ENCODE measurements at regions of chr20 and their contacts with region 1.

Region 1: GRCh38 chr20:24755411-24755922 is 193.6 kb upstream of the CST7 start:
- DNase-seq: peak; percentile 8
- ATAC-seq: peak; percentile 89

Region 2: DNA sequence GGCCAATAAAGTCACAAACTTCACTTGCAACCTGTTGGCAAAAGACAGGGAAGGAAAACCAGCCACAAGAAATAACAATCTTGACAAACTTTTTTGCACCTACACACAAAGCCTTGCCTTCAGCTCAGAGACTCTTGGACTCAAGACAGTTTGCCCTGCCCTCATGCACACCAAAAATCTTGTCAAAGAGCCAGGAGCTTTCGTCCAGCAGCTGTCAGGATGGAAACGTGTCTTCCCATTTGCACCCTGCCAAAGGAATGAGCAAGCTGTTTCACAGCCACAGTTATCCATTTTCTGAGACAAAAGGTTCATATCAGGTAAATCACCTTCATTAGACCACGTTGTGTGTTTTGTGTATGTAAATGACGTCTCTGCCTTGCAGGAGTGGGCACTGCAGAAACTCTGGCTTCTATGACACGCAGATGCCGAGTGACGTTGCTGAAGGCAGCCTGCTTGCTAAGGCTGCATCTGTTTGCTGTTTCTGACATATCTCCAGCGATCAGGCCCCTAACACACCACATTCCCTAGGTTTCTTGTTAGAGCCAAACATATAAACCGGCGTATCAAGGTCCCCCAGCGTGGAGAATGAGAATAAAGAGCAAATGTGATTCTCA is 92.6 kb before region 1 on chr20:
- intact Hi-C with region 1: no loop called
- DNase-seq: peak; percentile 17
- ATAC-seq: no peak

Region 3: DNA sequence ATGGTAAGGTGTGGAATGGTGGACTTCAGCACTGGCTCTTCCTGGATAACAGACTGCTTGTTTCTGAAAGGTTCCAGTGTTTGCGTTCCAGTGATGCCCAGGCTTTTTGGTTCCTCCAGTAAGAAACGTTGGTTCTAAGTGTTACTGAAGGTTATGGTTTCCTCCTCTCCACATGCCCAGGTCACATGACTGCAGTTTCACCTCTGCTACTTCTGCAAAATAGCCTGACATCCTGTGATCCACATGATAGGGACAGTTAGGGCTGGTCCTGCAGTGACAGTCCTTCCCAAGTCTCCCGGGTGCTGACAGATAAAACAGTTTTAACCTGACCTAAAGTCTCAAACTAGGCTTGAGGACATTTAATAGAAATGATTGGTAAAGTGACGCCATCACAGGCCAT is 61.4 kb after region 1 on chr20:
- intact Hi-C with region 1: loop called (anchors 10 kb)
- DNase-seq: no peak
- ATAC-seq: no peak

Region 4: DNA sequence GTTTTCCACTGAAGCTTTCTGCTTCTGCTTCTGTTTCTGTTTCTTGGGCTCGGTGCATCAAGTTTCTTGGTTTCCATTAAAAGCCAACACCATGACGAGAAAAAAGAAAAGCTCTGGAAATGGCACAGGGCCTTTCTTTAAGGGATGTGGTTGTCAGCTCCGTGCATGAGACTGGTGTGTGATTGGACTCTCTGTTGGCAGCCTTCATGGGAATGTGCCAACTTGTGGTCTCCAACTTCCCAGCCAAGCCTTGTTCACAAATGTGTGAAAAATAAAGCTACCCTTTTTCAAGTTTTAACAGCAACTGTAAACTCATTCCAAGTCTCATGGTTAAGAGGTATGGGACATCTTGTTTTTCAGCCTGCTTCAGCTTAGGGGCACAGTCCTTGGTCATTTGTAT is 124.9 kb after region 1 on chr20:
- intact Hi-C with region 1: no loop called
- DNase-seq: no peak
- ATAC-seq: no peak